Thyroid gland (tissue), 4 donors: ENCODE measurements at regions of chr1 and their contacts with region 1.

Region 1: GRCh38 chr1:206979379-206980043 is 9.3 kb upstream of the FCAMR start:
- DNase-seq: no peak
- H3K4me3 ChIP-seq: no peak overlapping the region
- H3K27ac ChIP-seq: no peak overlapping the region
- H3K4me1 ChIP-seq: no peaks in the 10 kb centered on the region
- H3K27me3 ChIP-seq: no peaks in the 10 kb centered on the region
- CTCF ChIP-seq: peak in 3 of 6 experiments; percentile 26 to 37 (median 32)
- POLR2A ChIP-seq: no peak

Region 2: GRCh38 chr1:206935491-206936067 is 43.9 kb before region 1 on chr1:
- intact Hi-C with region 1: loop called (anchors 5 kb)
- DNase-seq: peak; percentile 54 to 57
- H3K4me3 ChIP-seq: no peak overlapping the region
- H3K27ac ChIP-seq: no peak overlapping the region
- H3K4me1 ChIP-seq: no peaks in the 10 kb centered on the region
- H3K27me3 ChIP-seq: no peaks in the 10 kb centered on the region
- CTCF ChIP-seq: peak in 5 of 6 experiments; percentile 40 to 61 (median 49)
- POLR2A ChIP-seq: no peak

Region 3: GRCh38 chr1:207145401-207146058 is 166.0 kb after region 1 on chr1:
- intact Hi-C with region 1: no loop called
- DNase-seq: no peak
- H3K4me3 ChIP-seq: no peak overlapping the region
- H3K27ac ChIP-seq: no peak overlapping the region
- H3K4me1 ChIP-seq: no peaks in the 10 kb centered on the region
- H3K27me3 ChIP-seq: no peaks in the 10 kb centered on the region
- CTCF ChIP-seq: no peak
- POLR2A ChIP-seq: no peak